Left cardiac atrium (tissue), 4 donors: ENCODE measurements at regions of chr1 and their contacts with region 1.

Region 1: GRCh38 chr1:23344111-23344986 is at the start of gene HNRNPR:
- DNase-seq: peak; percentile 100
- ATAC-seq: peak; percentile 97 to 98
- total RNA-seq, gene HNRNPR: 57.3 to 79.8 TPM

Region 2: GRCh38 chr1:23303524-23303923 is 40.8 kb before region 1 on chr1:
- intact Hi-C with region 1: no loop called
- DNase-seq: no peak
- ATAC-seq: no peak

Region 3: GRCh38 chr1:23403735-23404486 is 59.6 kb after region 1 on chr1:
- intact Hi-C with region 1: loop called (anchors 10 kb)
- DNase-seq: peak; percentile 86
- ATAC-seq: peak; percentile 92 to 93

Region 4: GRCh38 chr1:23444104-23444533 is 99.8 kb after region 1 on chr1:
- intact Hi-C with region 1: no loop called
- DNase-seq: peak; percentile 76
- ATAC-seq: peak; percentile 92 to 97